ENCODE measurements at regions of chr5 and their contacts with region 1.

Region 1: GRCh38 chr5:66864331-66864840 is 268.2 kb downstream of the MAST4 start:
- DNase-seq: peak; percentile 1
- ATAC-seq: no peak
- H3K4me3 ChIP-seq: no peak overlapping the region
- H3K27ac ChIP-seq: no peak overlapping the region
- H3K4me1 ChIP-seq: no peaks in the 10 kb centered on the region
- H3K27me3 ChIP-seq: no peaks in the 10 kb centered on the region
- CTCF ChIP-seq: peak; percentile 40; the same call in 1 of the 2 replicates

Region 2: GRCh38 chr5:66814146-66814991 is 50.0 kb before region 1 on chr5:
- CTCF ChIA-PET with region 1: no interaction called
- POLR2A ChIA-PET with region 1: no interaction called
- intact Hi-C with region 1: loop called (anchors 1 kb)
- DNase-seq: peak; percentile 49
- ATAC-seq: peak; percentile 53; the same call in 1 of the 2 replicates
- H3K4me3 ChIP-seq: no peak overlapping the region
- H3K27ac ChIP-seq: no peak overlapping the region
- H3K4me1 ChIP-seq: no peaks in the 10 kb centered on the region
- H3K27me3 ChIP-seq: no peaks in the 10 kb centered on the region
- CTCF ChIP-seq: peak; percentile 58

Region 3: DNA sequence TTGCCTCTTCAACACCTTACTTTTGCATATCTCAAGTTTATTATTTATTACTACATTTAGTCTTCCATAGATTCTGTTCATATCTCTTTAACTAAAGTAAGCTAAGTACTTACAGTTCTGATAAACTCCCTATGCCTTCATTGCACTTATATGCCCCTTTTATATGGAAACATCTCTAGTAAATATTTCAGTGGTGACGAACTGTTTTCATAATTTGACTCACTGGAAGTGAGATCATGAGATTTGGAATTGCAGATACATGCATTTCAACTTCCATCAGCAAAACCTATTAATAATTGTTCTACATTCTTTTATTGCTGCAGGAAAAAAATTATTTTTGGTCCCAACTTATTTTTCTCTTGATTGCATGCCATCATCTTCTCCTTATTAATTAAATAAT is 68.7 kb after region 1 on chr5:
- CTCF ChIA-PET with region 1: no interaction called
- POLR2A ChIA-PET with region 1: no interaction called
- intact Hi-C with region 1: no loop called
- DNase-seq: peak; percentile 65
- ATAC-seq: peak; percentile 76
- H3K4me3 ChIP-seq: no peak overlapping the region
- H3K27ac ChIP-seq: peak overlapping the region; percentile 53
- H3K4me1 ChIP-seq: peaks cover 8% of the 10 kb centered on the region
- H3K27me3 ChIP-seq: no peaks in the 10 kb centered on the region
- CTCF ChIP-seq: no peak

Measured in PC-3 (cell line).